Dendritic cell treated with granulocyte-macrophage colony-stimulating factor and Interleukin-4, amounts not matched to agents 40 ng/mL and 50 ng/mL, for 4 days (primary cell): ENCODE measurements at regions of chr1 and their contacts with region 1.

Region 1: GRCh38 chr1:77281491-77282186 is at the start of gene AK5:
- H3K4me3 Mint-ChIP-seq: peak within 1 kb of the TSS; percentile 72
- H3K27ac Mint-ChIP-seq: no peak within 1 kb of the TSS
- H3K4me1 Mint-ChIP-seq: peaks cover 23% of the 10 kb centered on the region
- H3K27me3 Mint-ChIP-seq: peaks cover 77% of the 10 kb centered on the region

Region 2: GRCh38 chr1:77253211-77253610 is 28.4 kb before region 1 on chr1:
- intact Hi-C with region 1: no loop called
- H3K4me3 Mint-ChIP-seq: no peak overlapping the region
- H3K27ac Mint-ChIP-seq: no peak overlapping the region
- H3K4me1 Mint-ChIP-seq: no peaks in the 10 kb centered on the region
- H3K27me3 Mint-ChIP-seq: no peaks in the 10 kb centered on the region

Region 3: GRCh38 chr1:77355010-77355409 is 73.4 kb after region 1 on chr1:
- intact Hi-C with region 1: no loop called
- H3K4me3 Mint-ChIP-seq: no peak overlapping the region
- H3K27ac Mint-ChIP-seq: no peak overlapping the region
- H3K4me1 Mint-ChIP-seq: peaks cover 7% of the 10 kb centered on the region
- H3K27me3 Mint-ChIP-seq: no peaks in the 10 kb centered on the region

Region 4: GRCh38 chr1:77416692-77417450 is 135.2 kb after region 1 on chr1:
- intact Hi-C with region 1: loop called (anchors 5 kb)
- H3K4me3 Mint-ChIP-seq: no peak overlapping the region
- H3K27ac Mint-ChIP-seq: no peak overlapping the region
- H3K4me1 Mint-ChIP-seq: peaks cover 46% of the 10 kb centered on the region
- H3K27me3 Mint-ChIP-seq: peaks cover 33% of the 10 kb centered on the region

Region 5: DNA sequence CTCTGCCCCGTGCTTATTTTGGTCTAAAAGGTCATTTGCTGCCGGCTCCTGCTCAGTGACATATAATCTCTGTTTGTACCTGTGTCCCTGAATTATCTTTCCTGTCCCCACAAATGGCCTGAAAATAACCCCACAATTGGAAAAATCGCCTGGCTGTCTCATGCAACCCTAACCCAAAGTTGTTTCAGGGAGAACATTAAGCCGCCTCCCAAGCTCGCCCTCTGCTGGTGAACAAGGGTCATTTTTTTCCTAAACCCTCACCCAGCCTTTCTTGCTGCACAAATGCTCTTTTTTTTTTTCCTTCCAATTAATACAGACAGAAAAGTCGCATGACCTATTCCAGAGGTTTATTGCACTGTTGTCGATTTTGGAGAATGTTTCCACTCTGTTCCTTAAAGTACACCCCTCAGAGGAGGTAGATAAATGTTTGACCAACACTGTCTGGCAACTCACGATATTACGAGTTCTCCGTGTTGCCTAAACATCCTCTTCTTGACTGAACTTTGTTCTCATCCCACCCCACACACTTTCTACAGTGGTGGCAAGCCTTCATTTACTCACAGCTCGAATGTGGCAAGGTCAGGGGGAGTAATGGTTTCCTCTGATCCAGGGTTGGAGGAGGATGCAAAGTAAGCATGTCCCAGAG is 252.1 kb after region 1 on chr1:
- intact Hi-C with region 1: loop called (anchors 10 kb)
- H3K4me3 Mint-ChIP-seq: no peak overlapping the region
- H3K27ac Mint-ChIP-seq: no peak overlapping the region
- H3K4me1 Mint-ChIP-seq: peaks cover 16% of the 10 kb centered on the region
- H3K27me3 Mint-ChIP-seq: no peaks in the 10 kb centered on the region

Region 6: GRCh38 chr1:79283456-79283855 is 2001.8 kb after region 1 on chr1:
- intact Hi-C with region 1: no loop called
- H3K4me3 Mint-ChIP-seq: no peak overlapping the region
- H3K27ac Mint-ChIP-seq: no peak overlapping the region
- H3K4me1 Mint-ChIP-seq: no peaks in the 10 kb centered on the region
- H3K27me3 Mint-ChIP-seq: no peaks in the 10 kb centered on the region